ENCODE measurements at regions of chr17 and their contacts with region 1.

Region 1: DNA sequence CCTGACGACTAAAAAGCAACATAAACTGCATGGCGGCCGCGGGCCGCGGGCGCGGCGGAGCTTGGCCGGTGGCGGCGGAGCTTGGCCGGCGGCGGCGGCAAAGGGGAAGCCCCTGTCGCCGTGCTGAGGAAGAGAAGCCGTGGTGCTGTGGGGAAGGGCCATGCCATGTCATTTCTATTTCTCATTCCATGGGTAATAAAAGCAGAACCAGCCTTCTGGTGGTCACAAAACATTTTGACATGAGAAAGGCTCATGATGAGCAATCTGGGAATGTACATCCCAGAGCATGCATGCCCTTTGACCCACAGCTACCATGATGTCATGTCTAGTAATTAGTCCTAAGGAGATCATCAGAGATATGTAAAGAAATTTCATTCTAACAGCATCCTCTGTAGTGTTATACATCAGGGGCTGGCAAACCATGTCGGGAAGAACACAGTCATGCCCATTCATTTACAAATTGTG is 23.9 kb upstream of the HEATR6 start:
- DNase-seq: peak; percentile 37
- H3K4me3 ChIP-seq: peak overlapping the region in 2 of 4 donors; percentile 17 to 37
- H3K27ac ChIP-seq: peak overlapping the region in 3 of 4 donors; percentile 16 to 47 (median 17)
- H3K4me1 ChIP-seq: peaks cover 0 to 4% (median 0%) of the 10 kb centered on the region in 4 donors
- H3K27me3 ChIP-seq: no peaks in the 10 kb centered on the region
- CTCF ChIP-seq: no peak
- EP300 ChIP-seq: no peak
- POLR2A ChIP-seq: no peak

Region 2: DNA sequence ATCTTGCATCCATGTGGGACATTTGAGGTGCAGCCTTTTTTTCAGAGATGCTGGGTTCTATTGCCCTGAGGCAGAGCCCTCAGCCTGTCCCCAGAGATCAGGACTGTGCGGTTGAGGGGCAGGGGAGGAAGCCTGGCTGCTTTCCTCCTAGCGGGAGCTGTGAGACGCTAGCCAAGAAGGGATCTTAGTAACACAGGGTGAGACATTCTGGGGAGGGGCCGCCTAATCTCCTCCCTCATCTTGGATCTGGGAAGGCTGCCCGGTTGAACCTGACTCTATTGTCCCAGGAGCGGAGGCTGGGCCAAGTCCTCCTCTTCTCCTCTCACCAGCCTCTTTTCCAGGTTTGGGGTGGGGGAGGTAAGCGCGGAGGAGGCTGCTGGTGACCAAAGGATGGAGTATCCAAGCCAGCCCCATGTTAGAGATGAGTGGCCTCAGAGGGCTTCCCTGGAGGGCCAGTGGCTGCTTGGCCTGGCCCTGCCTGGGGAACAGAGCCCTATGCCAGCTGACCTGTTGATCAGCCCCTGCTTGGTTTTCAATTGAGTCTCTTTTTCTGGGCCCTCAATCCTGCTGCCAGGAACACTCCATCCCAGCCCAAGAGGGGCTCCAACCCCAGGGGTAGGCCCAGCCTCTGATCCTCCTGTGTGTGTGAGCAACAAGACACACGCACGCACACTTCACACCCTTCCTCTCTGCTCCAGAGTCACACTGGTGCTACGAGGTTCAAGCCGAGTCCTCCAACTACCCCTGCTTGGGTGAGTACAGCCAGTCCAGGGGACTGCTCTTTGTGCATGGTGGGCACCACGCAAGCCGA is 52.2 kb after region 1 on chr17:
- in situ Hi-C with region 1: no loop called
- intact Hi-C with region 1: loop called (anchors 10 kb)
- DNase-seq: no peak
- H3K4me3 ChIP-seq: no peak overlapping the region
- H3K27ac ChIP-seq: no peak overlapping the region
- H3K4me1 ChIP-seq: peaks cover 0 to 18% (median 11%) of the 10 kb centered on the region in 4 donors
- H3K27me3 ChIP-seq: peaks cover 65% of the 10 kb centered on the region
- CTCF ChIP-seq: no peak
- EP300 ChIP-seq: no peak
- POLR2A ChIP-seq: no peak